Natural killer cell (primary cell): ENCODE measurements at regions of chr6 and their contacts with region 1.

Region 1: DNA sequence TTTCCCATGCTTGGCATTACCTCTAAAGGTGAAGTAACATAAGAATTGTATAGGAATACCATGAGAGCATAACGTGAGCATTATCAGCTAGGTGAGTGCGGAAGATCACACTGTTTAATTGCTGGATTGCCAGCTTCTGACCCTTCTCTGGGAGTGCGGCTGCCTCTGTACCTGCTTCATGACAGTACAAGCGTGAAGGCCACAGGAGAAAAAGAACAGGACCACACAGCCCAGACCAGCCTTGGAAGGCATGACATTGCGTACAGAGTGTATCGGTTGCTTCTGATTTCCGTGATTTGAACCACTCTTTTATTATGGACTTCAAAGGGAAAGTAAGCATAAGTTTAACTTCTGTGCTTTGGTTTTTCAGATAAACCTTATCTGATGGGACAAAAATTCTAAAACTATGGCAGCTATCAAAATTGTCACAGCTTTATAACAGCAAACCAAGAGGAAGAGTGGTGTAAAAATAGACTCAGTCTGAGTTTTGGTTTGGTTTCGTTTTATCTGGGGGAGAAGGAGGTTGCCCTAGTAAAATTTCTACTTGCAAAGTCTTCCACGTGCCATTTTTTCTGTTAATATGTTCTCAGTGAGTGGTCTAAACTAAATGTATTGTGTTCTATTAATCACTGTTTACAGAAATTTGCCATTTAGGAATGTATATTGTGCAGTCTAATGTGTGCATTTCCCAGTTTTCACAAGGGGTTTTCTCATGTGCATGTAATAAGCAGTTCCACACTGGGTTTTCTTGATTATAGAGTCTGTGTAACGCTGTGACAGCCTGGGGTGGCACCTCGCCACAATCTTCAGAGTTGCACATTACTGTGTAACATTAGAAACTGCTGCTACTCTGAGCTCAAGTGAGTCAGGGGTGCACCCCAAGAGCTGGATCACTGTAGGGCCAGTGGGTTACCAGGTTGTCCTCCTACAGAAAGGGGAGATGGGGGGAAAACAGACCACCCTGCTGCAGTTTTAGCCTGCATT is 97.3 kb downstream of the RPP40 start:
- DNase-seq: peak in 1 of 2 donors; percentile 26
- ATAC-seq: peak; percentile 77 to 86 (median 81)
- H3K4me3 ChIP-seq: peak overlapping the region; percentile 13
- H3K4me3 Mint-ChIP-seq: peak overlapping the region; percentile 87
- H3K27ac ChIP-seq: peak overlapping the region; percentile 61
- H3K27ac Mint-ChIP-seq: peak overlapping the region; percentile 82 to 90
- H3K4me1 ChIP-seq: peaks cover 20% of the 10 kb centered on the region
- H3K4me1 Mint-ChIP-seq: peaks cover 45 to 58% of the 10 kb centered on the region in 2 donors
- H3K27me3 ChIP-seq: no peaks in the 10 kb centered on the region
- H3K27me3 Mint-ChIP-seq: no peaks in the 10 kb centered on the region
- CTCF ChIP-seq: no peak

Region 2: GRCh38 chr6:4889701-4890100 is 16.9 kb before region 1 on chr6:
- intact Hi-C with region 1: no loop called
- DNase-seq: no peak
- ATAC-seq: peak in 1 of 3 donors; percentile 46
- H3K4me3 ChIP-seq: no peak overlapping the region
- H3K4me3 Mint-ChIP-seq: no peak overlapping the region
- H3K27ac ChIP-seq: no peak overlapping the region
- H3K27ac Mint-ChIP-seq: peak overlapping the region in 1 of 2 donors; percentile 53
- H3K4me1 ChIP-seq: no peaks in the 10 kb centered on the region
- H3K4me1 Mint-ChIP-seq: peaks cover 55 to 61% of the 10 kb centered on the region in 2 donors
- H3K27me3 ChIP-seq: no peaks in the 10 kb centered on the region
- H3K27me3 Mint-ChIP-seq: no peaks in the 10 kb centered on the region
- CTCF ChIP-seq: no peak

Region 3: DNA sequence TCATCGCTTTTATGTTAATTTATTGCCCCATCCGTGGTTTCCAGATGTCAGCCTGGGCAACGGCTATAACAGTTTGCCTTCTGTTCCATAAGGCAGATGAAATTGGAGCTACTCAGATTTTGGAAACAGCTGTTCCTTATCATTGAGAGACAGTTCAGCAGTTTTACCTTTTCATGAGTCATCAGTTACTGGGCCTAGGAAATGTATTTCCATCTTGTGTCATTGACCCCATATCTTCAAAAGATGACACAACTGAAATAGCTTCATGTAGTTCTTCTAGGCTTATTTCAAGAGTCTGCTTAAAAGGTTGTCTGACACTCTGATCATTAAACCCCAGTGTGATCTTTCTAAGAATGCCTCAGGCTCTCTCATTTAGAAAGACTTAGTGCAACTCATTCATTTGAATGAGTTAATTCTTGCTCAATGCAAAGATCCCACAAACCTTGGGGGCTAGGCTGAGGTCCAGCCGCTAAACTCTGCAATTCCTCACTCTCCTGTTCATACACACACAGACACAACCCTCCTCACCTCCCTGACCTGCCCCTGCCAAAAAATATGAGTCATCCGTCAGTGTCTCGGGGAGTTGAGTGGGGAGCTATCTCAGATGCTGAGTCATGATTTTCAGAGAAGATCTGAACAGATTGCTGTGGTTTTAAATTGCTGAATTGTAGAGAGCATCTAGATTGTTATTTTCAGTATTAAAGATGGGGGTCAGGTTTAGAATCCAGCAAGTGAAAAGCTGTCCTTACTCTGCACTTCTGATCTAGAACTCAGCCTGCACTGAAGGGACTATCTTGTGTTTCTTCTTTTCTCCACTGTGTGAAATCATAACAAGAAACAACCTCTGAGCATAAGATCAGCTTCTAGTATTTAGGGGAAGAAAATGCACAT is 35.4 kb after region 1 on chr6:
- intact Hi-C with region 1: loop called (anchors 2 kb)
- DNase-seq: peak; percentile 28 to 31
- ATAC-seq: peak; percentile 82 to 89 (median 83)
- H3K4me3 ChIP-seq: no peak overlapping the region
- H3K4me3 Mint-ChIP-seq: peak overlapping the region; percentile 33
- H3K27ac ChIP-seq: peak overlapping the region; percentile 22
- H3K27ac Mint-ChIP-seq: peak overlapping the region; percentile 82 to 88
- H3K4me1 ChIP-seq: peaks cover 12% of the 10 kb centered on the region
- H3K4me1 Mint-ChIP-seq: peaks cover 34 to 43% of the 10 kb centered on the region in 2 donors
- H3K27me3 ChIP-seq: no peaks in the 10 kb centered on the region
- H3K27me3 Mint-ChIP-seq: no peaks in the 10 kb centered on the region
- CTCF ChIP-seq: no peak